Activated CD4-positive, alpha-beta T cell treated with anti-CD3 and anti-CD28 coated beads for 36 hours (primary cell): ENCODE measurements at regions of chr3 and their contacts with region 1.

Region 1: DNA sequence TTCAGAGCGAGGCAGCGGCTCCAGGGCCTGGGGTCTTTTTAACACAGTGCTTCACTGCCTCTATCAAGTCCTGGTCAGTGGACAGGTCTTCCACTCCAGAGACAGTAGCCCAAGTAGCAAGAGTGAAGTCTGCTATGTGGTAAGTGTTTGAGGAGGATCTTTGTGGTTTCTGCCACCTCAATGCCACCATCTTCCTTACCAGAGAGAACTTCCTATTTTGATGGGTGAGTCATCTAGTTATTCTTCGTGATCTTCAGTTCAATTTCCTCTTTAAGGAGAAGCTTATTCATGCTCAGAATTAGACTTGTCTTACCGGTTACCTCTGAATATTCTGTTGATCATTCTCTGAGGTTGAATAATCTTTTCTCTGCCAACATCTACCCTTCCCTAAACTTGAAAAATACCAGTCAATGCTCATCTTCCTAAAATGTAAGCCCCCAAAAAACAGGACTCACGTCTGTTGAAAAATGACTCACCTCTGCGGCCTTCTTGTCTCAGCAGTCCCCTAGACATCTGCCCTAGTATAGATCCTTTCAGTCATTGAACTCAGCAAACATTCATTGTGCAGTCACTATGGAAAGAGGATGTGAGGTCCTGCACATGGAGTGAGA is 32.2 kb upstream of the BCL6 start:
- DNase-seq: peak; percentile 69
- ATAC-seq: peak; percentile 88
- H3K4me3 Mint-ChIP-seq: peak overlapping the region; percentile 27
- H3K27ac Mint-ChIP-seq: peak overlapping the region; percentile 92
- H3K4me1 Mint-ChIP-seq: peaks cover 38% of the 10 kb centered on the region
- H3K27me3 Mint-ChIP-seq: peaks cover 11% of the 10 kb centered on the region

Region 2: GRCh38 chr3:187802928-187803259 is 25.5 kb after region 1 on chr3:
- CTCF ChIA-PET with region 1: interaction called, 6 read pairs
- POLR2A ChIA-PET with region 1: interaction called, 5 read pairs
- intact Hi-C with region 1: loop called (anchors 1 kb)
- DNase-seq: peak; percentile 86
- ATAC-seq: peak; percentile 60
- H3K4me3 Mint-ChIP-seq: peak overlapping the region; percentile 34
- H3K27ac Mint-ChIP-seq: peak overlapping the region; percentile 81
- H3K4me1 Mint-ChIP-seq: peaks cover 93% of the 10 kb centered on the region
- H3K27me3 Mint-ChIP-seq: no peaks in the 10 kb centered on the region

Region 3: DNA sequence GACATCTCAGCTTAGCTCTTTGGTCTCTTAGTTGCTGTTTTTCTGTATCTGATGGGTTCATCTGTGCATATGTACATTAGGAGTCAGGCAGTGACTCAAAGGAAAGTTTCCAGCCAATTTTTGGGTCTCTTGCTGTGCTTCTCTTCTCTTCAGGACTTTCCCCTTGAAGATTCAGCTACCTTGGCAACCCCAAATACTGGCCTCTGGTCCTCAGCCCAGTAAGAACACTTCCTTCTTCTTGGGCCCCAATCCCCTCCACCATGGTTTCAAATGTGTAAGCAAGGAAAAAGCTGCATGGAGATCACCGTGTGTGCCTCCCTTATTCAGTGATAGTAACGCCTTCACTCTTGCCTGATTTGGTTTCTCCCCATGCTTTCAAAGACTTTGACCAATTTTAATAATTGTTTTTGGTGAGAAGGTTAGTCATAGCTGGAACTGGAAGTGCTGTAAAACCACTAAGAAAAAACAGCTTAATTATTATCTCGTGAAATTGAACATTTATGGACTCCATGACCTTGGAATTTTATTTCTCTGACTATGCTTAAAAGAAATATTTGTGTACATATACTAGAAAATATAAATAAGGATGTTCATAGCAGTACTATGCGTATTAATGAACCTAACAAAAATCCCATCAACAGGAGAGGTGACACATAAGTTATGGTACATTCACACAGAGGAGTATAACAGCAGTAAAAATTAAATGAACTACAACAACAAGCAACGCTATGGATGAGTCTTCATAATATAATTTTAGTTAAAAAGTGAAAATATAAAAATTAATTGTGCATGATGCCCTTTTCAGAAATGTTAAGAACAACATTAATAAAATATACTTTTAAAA is 93.1 kb after region 1 on chr3:
- CTCF ChIA-PET with region 1: no interaction called
- POLR2A ChIA-PET with region 1: no interaction called
- intact Hi-C with region 1: loop called in 1 of 2 experiments (anchors 5 kb)
- DNase-seq: peak; percentile 31
- ATAC-seq: peak; percentile 85
- H3K4me3 Mint-ChIP-seq: no peak overlapping the region
- H3K27ac Mint-ChIP-seq: peak overlapping the region; percentile 44
- H3K4me1 Mint-ChIP-seq: peaks cover 8% of the 10 kb centered on the region
- H3K27me3 Mint-ChIP-seq: no peaks in the 10 kb centered on the region